ENCODE measurements at regions of chr2 and their contacts with region 1.

Region 1: DNA sequence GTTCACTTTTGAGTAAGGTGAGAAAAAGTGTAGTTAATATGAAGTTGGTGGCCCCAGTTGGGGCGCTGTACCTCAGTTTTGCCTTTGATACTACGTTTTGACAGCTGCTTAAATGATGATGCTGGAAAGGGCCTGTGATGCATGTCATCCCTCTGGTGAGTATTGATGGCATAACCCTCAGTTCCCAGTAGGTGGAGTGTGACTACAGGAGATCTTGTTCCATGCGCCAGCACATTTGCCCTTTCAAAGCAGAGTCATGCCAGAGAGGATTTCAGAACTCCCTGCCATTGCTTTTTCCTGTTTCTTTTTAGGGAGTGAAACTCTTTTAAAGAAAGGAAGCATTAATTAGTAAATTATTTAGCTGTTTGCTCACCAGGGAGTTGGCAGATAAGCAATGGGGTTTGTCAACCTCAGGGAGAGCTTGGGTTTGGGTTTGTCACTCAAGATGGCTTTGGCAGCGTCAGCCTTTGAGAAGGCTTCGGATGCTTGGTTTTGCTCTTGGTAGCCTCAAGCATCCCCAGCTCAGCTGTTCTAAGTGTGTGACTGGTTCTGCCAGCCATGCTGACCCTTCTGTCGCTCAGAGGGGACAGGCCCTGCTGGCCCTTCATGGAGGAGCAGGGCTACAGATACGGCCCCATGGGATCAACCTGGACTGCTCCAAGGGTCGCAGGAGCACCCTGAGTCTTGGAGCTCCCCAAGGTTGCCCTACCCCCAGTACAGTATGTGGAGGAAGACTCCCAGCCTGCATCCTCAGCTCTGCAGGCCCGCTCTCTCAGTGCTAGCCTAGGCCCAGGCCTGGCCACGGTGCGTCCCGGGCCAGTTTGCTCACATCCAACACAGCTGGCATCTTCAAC is 29.1 kb downstream of the ARMC9 start:
- DNase-seq: peak in 6 of 10 donors; percentile 41 to 87 (median 60)

Region 2: DNA sequence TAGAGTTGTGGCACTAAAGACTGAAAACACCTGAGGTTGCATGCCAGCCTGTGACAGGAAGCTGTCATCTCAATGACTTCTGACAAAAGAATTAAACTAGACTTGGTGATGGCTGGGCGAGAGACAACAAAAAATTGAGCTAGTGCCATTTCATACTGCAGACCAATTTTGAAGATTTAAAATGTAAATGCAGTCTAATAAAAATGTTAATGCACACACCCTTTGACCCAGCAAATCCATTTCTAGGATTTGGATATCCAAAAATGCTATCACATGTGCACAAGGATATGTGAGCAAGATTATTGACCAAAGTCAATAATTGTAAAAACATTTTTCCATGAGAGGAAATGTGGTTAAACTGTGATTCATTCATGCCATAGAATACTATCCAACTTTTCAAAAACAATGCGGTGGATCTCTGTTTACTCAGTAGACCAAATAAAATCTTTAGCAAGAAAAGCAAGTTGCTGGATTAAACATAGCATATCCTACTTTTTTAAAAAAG is 1299.7 kb before region 1 on chr2:
- intact Hi-C with region 1: no loop called
- DNase-seq: no peak

Region 3: GRCh38 chr2:231181860-231182512 is 45.5 kb before region 1 on chr2:
- intact Hi-C with region 1: no loop called
- DNase-seq: peak in 2 of 10 donors; percentile 25 to 89

Region 4: GRCh38 chr2:231198291-231199173 is 29.0 kb before region 1 on chr2 and contains the start of gene ARMC9:
- intact Hi-C with region 1: no loop called
- DNase-seq: peak; percentile 64 to 97 (median 80)

Region 5: DNA sequence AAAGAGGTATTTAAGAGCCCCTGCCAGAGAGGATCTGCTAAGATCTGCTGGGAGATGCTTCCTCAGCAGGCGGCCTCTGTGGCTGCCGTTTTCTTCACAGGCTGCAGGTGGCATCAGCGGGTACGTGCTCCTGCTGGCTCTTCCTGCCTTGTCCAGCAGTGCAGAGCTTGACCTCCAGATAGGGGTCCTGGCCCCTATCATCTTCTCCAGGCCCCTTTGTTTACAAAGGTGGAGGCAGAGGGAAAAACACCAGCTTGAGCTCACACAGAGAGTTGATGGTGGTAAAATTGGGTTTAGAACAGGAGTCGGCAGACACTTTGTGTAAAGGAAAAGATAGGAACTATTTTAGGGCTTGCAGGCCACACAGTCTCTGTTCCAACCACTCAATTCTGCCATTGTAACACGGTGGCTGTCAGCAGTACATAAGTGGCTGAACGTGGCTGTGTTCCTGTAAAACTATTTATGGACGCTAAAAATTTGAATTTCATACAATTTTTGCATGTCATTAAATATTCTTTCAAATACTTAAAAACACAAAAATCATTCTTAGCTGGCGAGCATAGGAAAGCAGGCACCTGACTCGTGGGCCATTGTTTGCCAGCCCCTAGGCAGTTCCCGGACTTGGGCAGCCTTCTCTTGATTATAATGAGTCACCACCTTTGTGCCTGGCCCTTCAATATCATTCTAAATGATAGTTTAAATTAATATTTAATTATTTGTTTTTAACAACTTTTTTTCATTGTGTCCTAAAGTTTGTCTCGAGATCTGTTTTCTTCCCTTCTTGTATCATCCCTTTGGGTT is 69.8 kb after region 1 on chr2:
- intact Hi-C with region 1: loop called (anchors 5 kb)
- DNase-seq: peak; percentile 54 to 96 (median 74)

Region 6: DNA sequence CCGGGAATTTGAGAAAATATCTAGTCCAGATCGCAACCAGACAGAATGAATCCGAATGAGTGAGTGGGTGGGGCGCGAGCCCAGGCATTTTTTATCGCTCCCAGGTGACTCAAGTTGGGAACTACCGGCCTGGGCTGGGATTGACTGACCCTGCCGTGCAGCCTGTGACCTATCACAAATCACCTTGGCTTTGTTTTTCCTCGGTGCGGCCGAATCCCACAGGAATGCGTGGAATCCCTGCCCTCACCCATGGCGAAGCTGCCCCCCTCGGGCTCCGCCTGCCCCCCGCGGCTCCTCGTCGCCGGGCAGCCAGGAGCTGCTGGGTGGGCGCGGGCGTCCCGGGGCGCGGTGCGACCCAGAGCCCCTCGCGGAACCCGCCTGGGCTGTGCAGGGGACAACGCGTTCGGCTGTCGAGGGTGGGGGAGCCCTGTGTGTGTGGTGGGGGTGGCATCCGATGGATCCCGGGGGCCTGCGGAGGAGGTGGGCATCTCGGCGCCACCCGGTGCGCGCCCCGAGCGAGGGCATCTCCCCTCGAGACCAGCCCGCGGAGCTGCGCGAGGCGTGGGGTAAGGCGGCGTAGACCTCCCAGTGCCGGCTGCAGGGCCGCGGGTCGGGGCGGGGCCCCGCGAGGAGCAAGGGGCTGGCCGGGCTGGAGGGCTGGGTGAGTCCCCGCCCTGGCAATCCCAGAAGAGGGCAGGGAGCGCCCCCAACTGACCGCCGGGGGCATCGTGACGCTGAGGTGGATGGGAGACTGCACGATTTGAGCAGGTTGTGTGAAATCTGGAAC is 184.5 kb after region 1 on chr2:
- intact Hi-C with region 1: loop called (anchors 2 kb)
- DNase-seq: peak; percentile 66 to 99 (median 89)

Region 7: GRCh38 chr2:231452799-231453508 is 225.4 kb after region 1 on chr2:
- intact Hi-C with region 1: loop called (anchors 2 kb)
- DNase-seq: peak in 1 of 10 donors; percentile 47

Region 8: GRCh38 chr2:231961349-231962166 is 734.0 kb after region 1 on chr2 and contains the start of gene DIS3L2:
- intact Hi-C with region 1: no loop called
- DNase-seq: peak; percentile 78 to 97 (median 84)